ENCODE measurements at regions of chr5 and their contacts with region 1.

Region 1: DNA sequence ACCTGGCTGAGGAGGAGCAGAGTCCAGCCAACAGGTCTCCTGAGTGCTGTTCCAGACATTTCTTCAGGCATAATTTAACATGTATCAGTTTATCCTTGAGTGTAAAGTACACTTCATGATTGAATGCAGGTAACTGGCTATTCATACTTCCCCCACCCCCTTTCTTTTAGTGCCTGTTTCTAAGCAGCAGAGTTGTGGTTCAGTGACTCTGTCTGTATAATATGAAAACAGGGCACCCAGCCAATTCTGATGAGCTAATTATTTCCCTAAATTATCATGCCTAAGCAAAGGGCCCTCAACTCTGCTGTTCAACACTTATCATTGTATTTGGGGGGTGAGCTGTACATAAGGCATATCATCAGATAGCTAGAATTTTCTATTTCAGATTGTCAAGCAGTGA is 51.9 kb upstream of the ZSWIM6 start:
- DNase-seq: no peak
- H3K4me3 Mint-ChIP-seq: no peak overlapping the region
- H3K27ac Mint-ChIP-seq: no peak overlapping the region
- H3K4me1 Mint-ChIP-seq: peaks cover 11% of the 10 kb centered on the region
- H3K27me3 Mint-ChIP-seq: no peaks in the 10 kb centered on the region

Region 2: DNA sequence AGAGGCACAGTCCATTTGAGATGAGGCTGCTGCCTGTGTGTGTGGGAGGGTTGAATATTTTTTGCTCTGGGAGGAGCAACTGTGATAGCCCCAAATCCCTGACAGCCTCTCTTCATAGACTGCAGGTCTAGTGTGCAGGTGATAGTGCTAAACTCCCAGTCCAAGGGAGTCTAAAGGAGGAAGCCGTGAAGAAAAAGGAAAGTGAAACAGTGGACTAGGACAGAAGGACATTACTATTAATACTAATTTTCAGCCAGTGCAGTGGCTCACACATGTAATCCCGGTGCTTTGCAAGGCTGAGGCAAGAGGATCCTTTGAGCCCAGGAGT is 1681.7 kb before region 1 on chr5:
- intact Hi-C with region 1: loop called (anchors 10 kb)
- DNase-seq: no peak
- H3K4me3 Mint-ChIP-seq: no peak overlapping the region
- H3K27ac Mint-ChIP-seq: no peak overlapping the region
- H3K4me1 Mint-ChIP-seq: peaks cover 36% of the 10 kb centered on the region
- H3K27me3 Mint-ChIP-seq: peaks cover 3% of the 10 kb centered on the region

Region 3: GRCh38 chr5:60436518-60436917 is 843.7 kb before region 1 on chr5:
- intact Hi-C with region 1: no loop called
- DNase-seq: no peak
- H3K4me3 Mint-ChIP-seq: no peak overlapping the region
- H3K27ac Mint-ChIP-seq: no peak overlapping the region
- H3K4me1 Mint-ChIP-seq: no peaks in the 10 kb centered on the region
- H3K27me3 Mint-ChIP-seq: no peaks in the 10 kb centered on the region

Region 4: DNA sequence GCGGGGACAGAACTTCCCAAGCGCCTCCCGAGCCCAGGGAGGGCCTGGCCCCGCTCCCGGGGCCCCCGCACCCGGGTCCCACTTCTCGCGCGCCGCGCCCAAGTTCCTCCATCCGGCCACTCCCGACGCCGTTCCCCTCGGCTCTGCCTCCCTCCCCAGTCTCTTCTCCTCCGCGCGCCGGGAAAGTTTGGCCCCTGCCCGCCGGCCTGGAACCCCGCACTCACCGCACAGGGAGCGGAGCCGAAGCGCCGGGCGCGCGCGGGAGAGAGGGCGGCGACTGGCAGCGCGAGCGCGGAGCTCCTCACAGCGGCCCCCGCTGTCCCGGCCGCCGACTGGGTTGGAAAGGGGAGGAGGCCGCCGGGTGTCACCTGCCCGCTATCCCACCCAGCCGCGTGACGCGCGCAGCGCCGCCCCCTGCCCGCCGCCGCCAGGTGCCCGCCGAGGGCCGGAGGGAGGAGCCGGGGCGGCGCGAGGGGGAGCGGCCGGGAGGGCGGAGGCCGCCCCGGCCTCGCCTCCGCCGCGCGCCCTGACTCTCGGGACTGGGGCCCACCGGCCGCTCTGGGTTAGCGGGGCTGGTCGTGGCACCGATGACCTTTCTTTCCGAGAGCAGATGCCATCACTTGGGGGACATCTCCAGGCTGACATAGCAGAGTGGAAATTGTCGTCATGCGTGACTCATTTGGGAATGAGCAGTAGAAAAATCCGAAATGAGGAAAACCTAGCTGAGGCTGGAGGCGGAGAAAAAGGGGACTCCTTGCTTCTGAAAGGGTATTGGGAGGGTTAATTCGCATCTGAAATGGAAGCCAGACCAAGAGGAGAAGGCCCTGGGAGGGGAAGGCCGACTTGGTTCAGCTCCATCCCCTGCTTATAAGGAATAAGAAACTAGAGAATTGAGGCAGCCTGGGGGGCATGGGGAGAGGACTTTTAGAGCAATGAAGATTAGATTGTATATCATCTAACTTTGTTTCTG is 436.0 kb before region 1 on chr5 and contains the start of gene ELOVL7:
- intact Hi-C with region 1: loop called (anchors 10 kb)
- DNase-seq: peak; percentile 37
- H3K4me3 Mint-ChIP-seq: peak within 1 kb of the TSS; percentile 84
- H3K27ac Mint-ChIP-seq: no peak within 1 kb of the TSS
- H3K4me1 Mint-ChIP-seq: peaks cover 12% of the 10 kb centered on the region
- H3K27me3 Mint-ChIP-seq: peaks cover 63% of the 10 kb centered on the region
- total RNA-seq, gene ELOVL7: 0.34 and 0.49 TPM in 2 replicates

Region 5: DNA sequence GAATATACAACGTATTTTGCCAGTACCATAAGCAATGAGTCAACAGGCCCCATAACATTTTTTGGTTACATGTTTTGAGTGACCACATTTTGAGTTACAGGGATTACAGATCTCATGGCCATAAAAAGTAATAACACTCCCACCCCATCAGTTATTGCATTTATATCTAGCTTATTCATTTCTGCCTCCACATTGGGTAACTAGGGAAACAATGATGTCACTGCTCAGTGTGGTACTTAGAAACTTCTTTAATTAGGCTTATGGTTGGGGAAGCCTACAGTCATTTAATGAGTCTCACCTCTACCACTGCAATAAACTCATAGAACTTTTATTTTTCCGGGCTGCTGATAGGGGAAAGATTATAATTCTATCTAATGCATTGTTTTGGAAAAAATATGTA is 78.0 kb before region 1 on chr5:
- intact Hi-C with region 1: loop called (anchors 2 kb)
- DNase-seq: no peak
- H3K4me3 Mint-ChIP-seq: no peak overlapping the region
- H3K27ac Mint-ChIP-seq: peak overlapping the region; percentile 7
- H3K4me1 Mint-ChIP-seq: peaks cover 11% of the 10 kb centered on the region
- H3K27me3 Mint-ChIP-seq: peaks cover 5% of the 10 kb centered on the region

Region 6: GRCh38 chr5:61306511-61307131 is 26.4 kb after region 1 on chr5:
- intact Hi-C with region 1: loop called (anchors 2 kb)
- DNase-seq: no peak
- H3K4me3 Mint-ChIP-seq: peak overlapping the region; percentile 65
- H3K27ac Mint-ChIP-seq: peak overlapping the region; percentile 81
- H3K4me1 Mint-ChIP-seq: peaks cover 28% of the 10 kb centered on the region
- H3K27me3 Mint-ChIP-seq: peaks cover 5% of the 10 kb centered on the region

Region 7: GRCh38 chr5:61534481-61535267 is 254.5 kb after region 1 on chr5:
- intact Hi-C with region 1: loop called (anchors 5 kb)
- DNase-seq: no peak
- H3K4me3 Mint-ChIP-seq: peak overlapping the region; percentile 25
- H3K27ac Mint-ChIP-seq: peak overlapping the region; percentile 69
- H3K4me1 Mint-ChIP-seq: peaks cover 16% of the 10 kb centered on the region
- H3K27me3 Mint-ChIP-seq: no peaks in the 10 kb centered on the region

Region 8: DNA sequence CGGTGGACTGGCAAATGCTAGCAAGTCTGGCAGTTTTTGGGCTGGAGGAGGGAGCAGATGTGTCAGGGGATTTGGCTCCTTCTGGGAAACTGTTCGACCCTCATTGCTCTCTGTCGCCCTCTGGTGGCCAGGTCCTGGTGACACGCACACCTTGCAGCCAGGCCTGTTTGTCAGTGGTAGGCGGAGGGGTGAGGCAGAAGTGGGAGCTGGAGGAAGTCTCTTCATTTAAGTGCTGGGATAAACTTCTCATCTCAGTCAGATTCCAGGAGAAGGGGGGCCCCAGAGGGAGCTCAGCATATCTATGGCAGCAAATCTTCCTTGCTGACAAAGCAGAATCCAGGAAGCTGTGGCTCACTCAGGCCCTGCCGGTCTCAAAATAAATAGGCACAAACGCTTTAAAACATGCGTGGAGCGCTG is 378.4 kb after region 1 on chr5:
- intact Hi-C with region 1: loop called (anchors 1 kb)
- DNase-seq: peak; percentile 51
- H3K4me3 Mint-ChIP-seq: no peak overlapping the region
- H3K27ac Mint-ChIP-seq: no peak overlapping the region
- H3K4me1 Mint-ChIP-seq: no peaks in the 10 kb centered on the region
- H3K27me3 Mint-ChIP-seq: peaks cover 7% of the 10 kb centered on the region

Measured in activated T-helper 1 cell treated with anti-CD3 and anti-CD28 coated beads, Interleukin-12 subunit alpha, Interleukin-12 subunit beta, Interleukin-2, Interleukin-4 antibody, amounts not matched to agents 30 ng/mL and 10 ng/mL and 1 ng/mL, durations not matched to agents 14 hours and 24 hours and 36 hours (primary cell).